HEK293 (cell line): ENCODE measurements at regions of chr13 and their contacts with region 1.

Region 1: DNA sequence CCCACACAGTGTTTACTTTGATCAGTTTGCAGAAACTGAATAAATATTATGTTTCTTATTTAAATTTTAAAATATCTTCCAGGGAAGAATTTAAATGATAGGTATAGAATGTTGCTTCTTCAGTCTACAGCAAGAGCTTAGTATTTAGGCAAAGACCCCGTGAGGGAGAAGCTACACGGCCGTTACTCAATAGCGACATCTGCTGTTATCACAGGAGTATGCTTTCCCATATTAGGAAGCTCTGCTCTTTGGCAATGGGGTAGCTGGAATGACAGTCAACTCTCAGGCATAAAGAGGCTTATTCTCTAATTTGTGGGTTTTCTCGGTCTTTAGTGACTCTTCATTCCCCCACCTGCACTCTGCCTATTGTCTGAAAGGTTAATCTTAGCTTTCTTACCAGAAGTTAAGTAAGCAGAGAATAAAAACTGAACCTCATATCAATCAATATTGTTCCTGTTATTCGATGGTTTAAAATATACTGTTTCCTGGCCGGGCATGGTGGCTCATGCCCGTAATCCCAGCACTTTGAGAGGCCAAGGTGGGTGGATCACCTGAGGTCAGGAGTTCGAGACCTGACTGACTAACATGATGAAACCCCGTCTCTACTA is 13.2 kb upstream of the LHFPL6 start:
- H3K4me3 ChIP-seq: no peak overlapping the region
- H3K27ac ChIP-seq: no peak overlapping the region
- H3K4me1 ChIP-seq: no peaks in the 10 kb centered on the region
- CTCF ChIP-seq: no peak

Region 2: GRCh38 chr13:39047560-39047959 is 568.6 kb before region 1 on chr13:
- CTCF ChIA-PET with region 1: interaction called, 10 read pairs
- POLR2A ChIA-PET with region 1: no interaction called
- H3K4me3 ChIP-seq: no peak overlapping the region
- H3K27ac ChIP-seq: no peak overlapping the region
- H3K4me1 ChIP-seq: 0 out of 2 replicates have a peak, but pooled peaks cover 3% of the 10 kb centered on the region
- CTCF ChIP-seq: no peak

Region 3: GRCh38 chr13:39415008-39415802 is 201.0 kb before region 1 on chr13:
- CTCF ChIA-PET with region 1: interaction called, 28 read pairs
- POLR2A ChIA-PET with region 1: no interaction called
- H3K4me3 ChIP-seq: no peak overlapping the region
- H3K27ac ChIP-seq: no peak overlapping the region
- H3K4me1 ChIP-seq: no peaks in the 10 kb centered on the region
- CTCF ChIP-seq: no peak

Region 4: GRCh38 chr13:39602614-39603366 is 13.4 kb before region 1 on chr13 and contains the start of gene LHFPL6:
- CTCF ChIA-PET with region 1: interaction called, 15 read pairs
- POLR2A ChIA-PET with region 1: no interaction called
- H3K4me3 ChIP-seq: peak within 1 kb of the TSS; percentile 77
- H3K27ac ChIP-seq: peak within 1 kb of the TSS; percentile 79; the same call in 1 of the 2 replicates
- H3K4me1 ChIP-seq: peaks cover 11% of the 10 kb centered on the region; the same call in 1 of the 2 replicates
- CTCF ChIP-seq: peak; percentile 78; the same call in 1 of the 2 replicates